Ascending aorta (tissue), 2 donors: ENCODE measurements at regions of chr7 and their contacts with region 1.

Region 1: DNA sequence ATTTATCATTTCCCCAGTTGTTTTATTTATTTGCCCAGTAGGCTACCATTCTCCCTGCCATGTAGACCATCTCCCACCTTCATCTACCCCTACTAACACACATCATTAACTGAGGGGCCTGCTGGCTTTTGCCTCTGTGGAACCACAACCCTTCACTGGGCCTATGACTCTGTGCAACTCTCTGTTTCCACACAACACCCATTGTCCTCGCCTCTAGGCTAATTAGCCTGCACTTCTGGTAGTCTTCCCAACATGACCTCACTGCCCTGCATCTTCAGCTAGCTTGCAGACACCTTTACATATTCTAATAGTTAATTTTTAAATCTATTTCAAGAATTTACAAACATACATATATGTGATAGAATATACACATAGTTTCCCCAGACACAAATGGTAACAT is 7.5 kb downstream of the ANKIB1 start:
- DNase-seq: no peak
- H3K4me3 ChIP-seq: no peak overlapping the region
- H3K27ac ChIP-seq: no peak overlapping the region
- H3K4me1 ChIP-seq: peaks cover 0 to 11% of the 10 kb centered on the region in 2 donors
- H3K27me3 ChIP-seq: no peaks in the 10 kb centered on the region
- CTCF ChIP-seq: no peak

Region 2: GRCh38 chr7:91892821-91893340 is 360.4 kb before region 1 on chr7:
- intact Hi-C with region 1: no loop called
- DNase-seq: no peak
- H3K4me3 ChIP-seq: no peak overlapping the region
- H3K27ac ChIP-seq: no peak overlapping the region
- H3K4me1 ChIP-seq: no peaks in the 10 kb centered on the region
- H3K27me3 ChIP-seq: no peaks in the 10 kb centered on the region
- CTCF ChIP-seq: no peak

Region 3: DNA sequence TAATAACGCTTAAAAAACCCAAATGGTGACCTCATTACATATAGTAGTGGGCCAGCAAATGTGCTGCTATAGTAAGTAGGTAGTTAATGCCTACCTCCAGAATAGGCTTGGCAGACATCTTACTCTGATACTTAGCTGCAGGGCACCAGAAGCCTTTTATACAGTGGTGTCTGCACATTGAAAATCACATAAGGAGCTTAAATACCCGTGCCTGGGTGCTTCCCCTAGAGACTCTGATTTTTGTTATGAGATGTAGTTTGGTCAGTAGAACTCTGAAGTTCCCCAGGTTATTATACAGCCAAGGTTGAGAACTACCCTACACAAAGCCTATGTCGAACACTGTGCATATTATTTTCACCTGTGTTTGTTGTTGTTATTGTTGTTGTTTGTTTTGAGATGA is 39.7 kb after region 1 on chr7:
- intact Hi-C with region 1: loop called (anchors 5 kb)
- DNase-seq: no peak
- H3K4me3 ChIP-seq: no peak overlapping the region
- H3K27ac ChIP-seq: no peak overlapping the region
- H3K4me1 ChIP-seq: peaks cover 0 to 13% of the 10 kb centered on the region in 2 donors
- H3K27me3 ChIP-seq: no peaks in the 10 kb centered on the region
- CTCF ChIP-seq: no peak